Heart right ventricle (tissue), 16 donors: ENCODE measurements at regions of chr22 and their contacts with region 1.

Region 1: DNA sequence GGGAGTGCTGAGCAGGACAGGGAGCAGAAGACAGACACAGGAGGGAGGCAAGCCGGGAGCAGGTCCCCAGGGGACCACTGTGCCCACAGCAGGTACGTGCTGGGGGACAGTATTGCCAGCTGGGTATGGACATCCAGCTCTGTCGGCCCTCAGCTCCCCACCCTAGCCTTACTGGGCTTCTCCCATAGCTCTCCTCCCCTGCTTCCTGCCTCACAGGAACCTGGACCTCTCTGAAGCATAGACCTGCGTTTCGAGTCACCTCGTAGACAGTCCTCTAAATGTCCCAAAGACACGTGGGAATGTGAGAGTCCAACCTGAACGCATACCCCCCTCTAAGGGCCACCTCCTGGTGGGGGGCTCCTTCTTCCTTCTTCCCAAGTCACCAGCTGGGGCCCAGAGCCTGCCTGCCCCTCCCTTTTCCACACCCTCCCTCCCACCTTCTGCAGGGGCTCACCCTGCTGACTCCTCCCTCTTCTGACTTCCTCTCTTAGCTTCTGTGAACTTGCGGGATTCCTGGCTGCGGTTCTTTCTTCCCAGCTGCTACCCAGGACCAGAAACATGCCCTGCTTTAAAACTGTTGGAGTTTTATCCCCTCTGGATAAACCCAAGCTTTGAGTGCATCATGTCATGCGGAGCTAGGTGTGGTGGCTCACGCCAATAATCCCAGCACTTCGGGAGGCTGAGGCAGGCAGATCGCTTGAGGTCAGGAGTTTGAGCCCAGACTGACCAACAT is 10.0 kb downstream of the LRRC74B start:
- DNase-seq: no peak
- ATAC-seq: no peak
- H3K4me3 ChIP-seq: no peak overlapping the region
- H3K27ac ChIP-seq: no peak overlapping the region
- H3K4me1 ChIP-seq: no peaks in the 10 kb centered on the region
- H3K27me3 ChIP-seq: peaks cover 0 to 12% (median 5%) of the 10 kb centered on the region in 7 donors
- CTCF ChIP-seq: no peak

Region 2: DNA sequence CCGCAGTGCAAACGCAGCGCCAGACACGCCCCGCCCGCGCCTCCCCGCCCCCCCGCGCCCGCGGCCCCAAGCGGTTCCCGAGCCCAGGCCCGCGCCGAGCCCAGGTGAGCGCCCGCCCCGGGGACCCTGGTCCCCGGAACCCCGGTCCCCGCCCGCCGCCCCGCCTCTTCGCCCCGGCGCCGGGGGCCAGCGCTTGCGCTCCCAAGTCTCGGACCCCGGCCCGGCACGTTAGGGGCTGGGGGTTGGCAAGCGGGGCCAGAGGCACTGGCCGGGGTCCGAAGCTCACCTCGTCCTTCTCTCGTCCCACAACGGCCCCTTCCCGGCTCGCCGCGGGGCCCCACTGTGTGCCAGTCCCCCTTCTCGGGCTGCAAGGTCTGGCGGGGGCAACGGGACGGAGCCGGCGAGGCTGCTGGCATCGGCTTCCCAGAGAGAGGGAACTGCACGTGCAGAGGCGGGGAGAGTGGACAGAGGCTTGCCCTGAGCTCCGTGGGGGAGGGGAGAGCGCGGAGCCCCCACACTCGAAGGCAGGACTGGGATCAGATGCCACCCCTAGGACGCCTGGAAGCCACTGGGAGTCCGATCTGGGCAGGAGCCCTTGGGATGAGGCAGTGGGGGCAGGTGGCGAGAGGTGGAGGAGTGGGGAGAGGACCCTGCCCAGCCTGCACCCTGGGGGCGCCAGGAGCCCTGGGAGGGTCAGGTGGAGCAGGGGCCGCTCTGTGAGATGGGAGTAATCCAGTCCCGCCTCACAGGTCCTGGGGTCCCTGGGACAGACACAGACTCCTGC is 90.5 kb before region 1 on chr22:
- intact Hi-C with region 1: loop called in 1 of 10 experiments (anchors 10 kb)
- DNase-seq: no peak
- ATAC-seq: peak in 1 of 8 donors; percentile 14
- H3K4me3 ChIP-seq: peak overlapping the region in 9 of 10 donors; percentile 36 to 48 (median 42)
- H3K27ac ChIP-seq: no peak overlapping the region
- H3K4me1 ChIP-seq: peaks cover 3 to 30% (median 10%) of the 10 kb centered on the region in 9 donors
- H3K27me3 ChIP-seq: peaks cover 0 to 36% (median 16%) of the 10 kb centered on the region in 7 donors
- CTCF ChIP-seq: no peak

Region 3: DNA sequence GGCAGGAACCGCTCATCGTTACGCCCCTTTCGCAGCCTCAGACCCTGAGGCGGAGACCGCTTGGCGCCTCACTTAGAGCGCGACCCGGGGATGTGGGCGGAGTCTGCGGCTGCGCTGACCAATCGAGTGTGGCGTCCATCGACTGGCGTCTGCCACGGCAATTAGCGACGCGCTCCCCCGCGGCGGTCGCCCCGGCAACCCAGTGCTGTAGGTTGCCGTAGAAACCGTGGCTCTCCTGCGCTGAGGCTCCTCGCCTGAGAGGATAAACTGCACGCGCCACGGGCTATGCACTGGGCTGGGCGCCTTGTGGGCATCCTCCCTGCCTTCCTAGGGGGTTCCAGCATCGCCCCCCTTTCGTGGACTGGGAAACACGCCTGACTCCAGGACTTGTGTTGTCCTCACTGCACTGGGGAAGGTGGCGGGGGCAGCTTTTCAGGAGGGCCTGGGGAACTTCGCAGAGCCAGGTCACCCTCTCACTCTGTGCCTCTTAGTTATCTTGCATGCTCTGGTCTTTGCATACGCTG is 41.5 kb before region 1 on chr22:
- intact Hi-C with region 1: loop called in 1 of 10 experiments (anchors 5 kb)
- DNase-seq: peak; percentile 91 to 92
- ATAC-seq: peak; percentile 89 to 97 (median 94)
- H3K4me3 ChIP-seq: peak overlapping the region; percentile 40 to 63 (median 58)
- H3K27ac ChIP-seq: peak overlapping the region in 9 of 10 donors; percentile 49 to 86 (median 70)
- H3K4me1 ChIP-seq: peaks cover 11 to 26% (median 20%) of the 10 kb centered on the region in 9 donors
- H3K27me3 ChIP-seq: no peaks in the 10 kb centered on the region
- CTCF ChIP-seq: no peak